Transverse colon (tissue), 4 donors: ENCODE measurements at regions of chr2 and their contacts with region 1.

Region 1: DNA sequence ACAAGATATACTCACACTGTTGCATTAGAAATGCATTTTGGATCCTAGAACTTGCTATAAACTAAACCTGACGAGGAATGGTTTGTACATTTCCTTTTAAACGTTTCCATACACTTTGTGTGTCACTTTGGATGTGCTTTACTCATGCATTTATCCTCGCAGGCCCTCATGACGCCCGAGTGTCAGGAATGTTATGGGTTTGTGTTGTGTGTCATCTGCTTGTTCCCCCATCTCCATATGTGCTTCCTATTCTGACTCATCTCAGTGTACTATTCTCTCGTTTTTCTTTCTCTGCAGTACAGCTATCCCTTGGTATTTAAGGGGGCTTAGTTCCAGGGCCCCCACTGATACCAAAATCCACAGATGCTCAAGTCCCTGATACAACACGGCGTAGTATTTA is 121.5 kb upstream of the RASGRP3 start:
- DNase-seq: no peak
- H3K4me3 ChIP-seq: no peak overlapping the region
- H3K27ac ChIP-seq: no peak overlapping the region
- H3K4me1 ChIP-seq: peaks cover 0 to 7% (median 2%) of the 10 kb centered on the region in 4 donors
- H3K27me3 ChIP-seq: no peaks in the 10 kb centered on the region
- CTCF ChIP-seq: no peak
- EP300 ChIP-seq: no peak
- POLR2A ChIP-seq: no peak

Region 2: GRCh38 chr2:32135409-32135808 is 1219.6 kb before region 1 on chr2:
- in situ Hi-C with region 1: no loop called
- intact Hi-C with region 1: loop called (anchors 5 kb)
- DNase-seq: peak; percentile 28
- H3K4me3 ChIP-seq: no peak overlapping the region
- H3K27ac ChIP-seq: no peak overlapping the region
- H3K4me1 ChIP-seq: no peaks in the 10 kb centered on the region
- H3K27me3 ChIP-seq: no peaks in the 10 kb centered on the region
- CTCF ChIP-seq: peak; percentile 14 to 45 (median 37)
- EP300 ChIP-seq: no peak
- POLR2A ChIP-seq: no peak

Region 3: GRCh38 chr2:32559136-32559535 is 795.8 kb before region 1 on chr2:
- in situ Hi-C with region 1: no loop called
- intact Hi-C with region 1: no loop called
- DNase-seq: no peak
- H3K4me3 ChIP-seq: no peak overlapping the region
- H3K27ac ChIP-seq: peak overlapping the region in 2 of 4 donors; percentile 39 to 44
- H3K4me1 ChIP-seq: no peaks in the 10 kb centered on the region
- H3K27me3 ChIP-seq: no peaks in the 10 kb centered on the region
- CTCF ChIP-seq: no peak
- EP300 ChIP-seq: no peak
- POLR2A ChIP-seq: no peak